Heart left ventricle (tissue), 16 donors: ENCODE measurements at regions of chr7 and their contacts with region 1.

Region 1: GRCh38 chr7:36949711-36950600 is 225.7 kb upstream of the AOAH start:
- DNase-seq: peak in 1 of 5 donors; percentile 29
- ATAC-seq: peak in 1 of 4 donors; percentile 19
- H3K4me3 ChIP-seq: no peak overlapping the region
- H3K27ac ChIP-seq: no peak overlapping the region
- H3K4me1 ChIP-seq: peaks cover 0 to 29% (median 8%) of the 10 kb centered on the region in 12 donors
- H3K27me3 ChIP-seq: no peaks in the 10 kb centered on the region
- CTCF ChIP-seq: no peak
- POLR2A ChIP-seq: no peak

Region 2: GRCh38 chr7:36473454-36474282 is 476.3 kb before region 1 on chr7:
- intact Hi-C with region 1: loop called in 1 of 10 experiments (anchors 10 kb)
- DNase-seq: peak in 1 of 5 donors; percentile 31
- ATAC-seq: no peak
- H3K4me3 ChIP-seq: no peak overlapping the region
- H3K27ac ChIP-seq: no peak overlapping the region
- H3K4me1 ChIP-seq: peaks cover 0 to 7% (median 0%) of the 10 kb centered on the region in 12 donors
- H3K27me3 ChIP-seq: no peaks in the 10 kb centered on the region
- CTCF ChIP-seq: peak in 10 of 12 donors; percentile 9 to 49 (median 42)
- POLR2A ChIP-seq: no peak

Region 3: GRCh38 chr7:36871863-36872262 is 78.1 kb before region 1 on chr7:
- intact Hi-C with region 1: no loop called
- DNase-seq: no peak
- ATAC-seq: no peak
- H3K4me3 ChIP-seq: no peak overlapping the region
- H3K27ac ChIP-seq: no peak overlapping the region
- H3K4me1 ChIP-seq: no peaks in the 10 kb centered on the region
- H3K27me3 ChIP-seq: no peaks in the 10 kb centered on the region
- CTCF ChIP-seq: no peak
- POLR2A ChIP-seq: no peak

Region 4: DNA sequence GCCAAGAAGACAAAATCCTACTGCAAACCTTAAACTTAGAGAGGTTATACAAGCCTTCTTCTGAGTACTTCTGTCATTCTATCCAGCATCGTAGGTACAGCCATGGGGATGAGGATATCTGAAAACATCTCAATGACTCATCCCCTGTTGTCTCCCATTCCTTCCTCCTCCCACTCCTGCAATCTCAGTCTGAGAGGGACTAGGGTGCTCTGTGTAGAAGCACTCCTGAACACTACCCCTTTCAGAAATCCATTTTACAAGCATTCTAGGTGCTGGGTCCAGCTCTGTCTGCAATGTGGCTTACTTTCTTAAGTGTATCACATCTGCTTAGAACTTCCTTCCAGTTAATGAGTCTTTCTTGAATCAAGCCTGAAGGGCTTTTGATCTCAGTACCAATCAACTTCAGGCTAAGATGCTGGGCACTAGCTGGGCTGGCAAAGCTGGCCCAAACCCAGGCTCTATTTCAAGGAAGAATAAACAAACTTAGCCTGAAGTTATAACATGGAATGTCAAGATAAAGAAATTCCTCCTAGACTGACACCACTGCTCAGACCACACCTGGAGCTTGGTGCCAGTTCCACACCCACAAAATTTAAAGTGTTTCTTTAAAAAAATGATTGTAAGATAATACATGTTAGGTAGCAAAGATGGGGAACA is 44.6 kb after region 1 on chr7:
- intact Hi-C with region 1: no loop called
- DNase-seq: no peak
- ATAC-seq: no peak
- H3K4me3 ChIP-seq: no peak overlapping the region
- H3K27ac ChIP-seq: no peak overlapping the region
- H3K4me1 ChIP-seq: peaks cover 0 to 5% (median 0%) of the 10 kb centered on the region in 12 donors
- H3K27me3 ChIP-seq: no peaks in the 10 kb centered on the region
- CTCF ChIP-seq: no peak
- POLR2A ChIP-seq: no peak